ENCODE measurements at regions of chr1 and their contacts with region 1.

Region 1: DNA sequence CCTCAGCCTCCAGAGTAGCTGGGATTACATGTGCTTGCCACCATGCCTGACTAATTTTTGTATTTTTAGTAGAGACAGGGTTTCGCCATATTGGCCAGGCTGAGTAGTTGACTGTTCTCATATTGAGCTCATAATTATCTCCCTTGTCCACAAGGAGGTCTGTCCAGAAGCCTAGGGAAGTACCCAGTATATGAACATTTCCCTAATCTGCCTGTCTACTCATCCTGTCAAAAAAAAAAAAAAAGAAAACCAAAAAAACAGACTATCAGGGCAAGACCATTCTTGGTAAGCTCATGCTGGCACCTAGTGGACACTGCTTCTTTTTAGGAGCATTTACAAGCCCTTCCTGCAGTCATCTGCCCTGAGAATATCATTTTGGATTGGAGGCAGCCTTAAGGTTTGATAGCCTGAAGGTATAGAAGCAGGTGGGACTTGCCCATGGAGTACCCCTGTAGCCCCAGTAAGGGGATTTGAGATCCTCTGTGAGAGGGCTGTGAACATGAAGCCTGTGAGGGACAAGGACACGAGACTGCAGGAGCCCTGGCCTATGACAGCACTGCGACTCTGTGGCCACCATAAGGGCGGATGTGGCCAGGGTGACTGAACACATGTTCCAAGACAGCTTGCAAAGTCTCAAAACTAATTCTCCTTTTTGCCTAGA is 10.8 kb upstream of the DUSP12 start:
- DNase-seq: peak; percentile 29 to 66 (median 46)
- ATAC-seq: peak; percentile 59 to 69 (median 64)
- H3K4me3 ChIP-seq: no peak overlapping the region
- H3K27ac ChIP-seq: peak overlapping the region in 4 of 12 donors; percentile 3 to 91 (median 30)
- H3K4me1 ChIP-seq: peaks cover 0 to 40% (median 0%) of the 10 kb centered on the region in 12 donors
- H3K27me3 ChIP-seq: peaks cover 0 to 11% (median 0%) of the 10 kb centered on the region in 9 donors
- CTCF ChIP-seq: peak in 11 of 12 donors; percentile 12 to 46 (median 29)
- POLR2A ChIP-seq: no peak

Region 2: DNA sequence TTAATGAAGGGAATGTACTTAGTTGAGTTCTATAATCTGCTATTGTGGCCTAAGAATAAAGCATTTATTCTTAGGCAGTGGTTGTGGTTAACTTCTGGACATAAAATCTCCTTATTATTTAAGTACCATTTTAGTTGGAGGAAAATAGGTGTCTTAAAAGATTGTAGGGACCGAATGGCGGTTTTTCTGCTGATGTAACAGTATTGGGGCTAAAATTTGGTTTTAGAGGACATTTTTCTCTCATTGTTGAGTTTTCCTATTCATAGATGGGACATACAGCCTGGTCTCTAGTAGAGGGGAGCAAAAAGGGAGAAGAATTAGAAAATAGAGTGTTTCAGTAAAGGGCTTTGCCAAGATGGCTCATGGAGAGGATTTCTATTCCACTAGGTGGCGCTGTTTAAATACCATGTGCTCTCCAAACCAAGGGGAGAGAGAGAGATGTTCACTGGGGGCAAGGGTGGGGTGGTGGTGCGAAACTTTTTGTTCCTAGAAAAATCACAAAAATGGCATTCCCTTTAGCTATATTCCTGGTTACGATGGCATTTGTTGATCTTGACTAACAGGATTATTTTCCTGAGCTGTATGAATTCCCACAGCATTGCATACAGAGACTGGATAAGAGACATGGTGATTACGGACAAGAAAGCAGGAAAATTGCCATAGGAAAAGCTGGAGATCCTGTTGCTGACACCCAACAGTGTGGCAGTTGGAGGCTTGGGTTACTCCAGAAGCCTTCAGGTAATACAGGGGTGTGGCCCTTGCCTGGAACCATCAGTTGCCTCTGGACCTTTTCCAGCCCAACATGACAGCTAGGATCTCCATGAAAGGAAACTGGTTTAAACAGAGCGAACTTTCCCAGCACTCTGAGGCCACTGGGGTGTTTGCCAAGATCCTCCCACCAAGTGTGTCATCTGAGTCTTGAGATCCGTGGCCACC is 251.7 kb before region 1 on chr1:
- intact Hi-C with region 1: loop called (anchors 1 to 10 kb)
- DNase-seq: peak in 4 of 5 donors; percentile 47 to 62 (median 48)
- ATAC-seq: peak in 3 of 4 donors; percentile 59 to 77 (median 60)
- H3K4me3 ChIP-seq: peak overlapping the region in 4 of 12 donors; percentile 6 to 26 (median 10)
- H3K27ac ChIP-seq: no peak overlapping the region
- H3K4me1 ChIP-seq: peaks cover 0 to 24% (median 0%) of the 10 kb centered on the region in 12 donors
- H3K27me3 ChIP-seq: peaks cover 0 to 61% (median 14%) of the 10 kb centered on the region in 9 donors
- CTCF ChIP-seq: peak; percentile 59 to 82 (median 72)
- POLR2A ChIP-seq: no peak